Caco-2 (cell line): ENCODE measurements at regions of chr14 and their contacts with region 1.

Region 1: DNA sequence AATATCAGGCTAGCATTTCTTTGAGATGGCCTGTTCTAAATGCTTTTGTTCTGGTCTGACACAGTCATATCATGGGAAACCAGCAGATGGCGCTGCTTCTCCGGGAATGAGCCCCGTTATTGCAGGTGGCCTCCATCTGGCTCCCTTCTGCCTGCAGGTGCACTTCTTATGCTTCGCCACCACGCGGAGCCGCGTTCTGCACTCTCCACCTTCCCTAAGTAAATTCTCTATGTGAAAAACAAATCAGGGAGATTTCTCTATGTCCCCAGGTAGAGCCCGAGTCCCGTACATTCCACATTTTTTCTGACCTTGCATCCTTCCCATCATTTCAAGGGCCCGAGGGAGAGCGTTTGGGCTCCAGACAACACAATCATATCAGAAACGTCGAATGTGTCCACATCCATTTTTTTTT is 26.2 kb downstream of the GLRX5 start:
- DNase-seq: peak; percentile 86 to 91
- H3K4me3 ChIP-seq: no peak overlapping the region
- H3K4me3 Mint-ChIP-seq: no peak overlapping the region
- H3K27ac Mint-ChIP-seq: no peak overlapping the region
- H3K4me1 ChIP-seq: no peaks in the 10 kb centered on the region
- H3K4me1 Mint-ChIP-seq: no peaks in the 10 kb centered on the region
- H3K27me3 ChIP-seq: no peaks in the 10 kb centered on the region
- H3K27me3 Mint-ChIP-seq: no peaks in the 10 kb centered on the region
- CTCF ChIP-seq: peak; percentile 95 to 97

Region 2: DNA sequence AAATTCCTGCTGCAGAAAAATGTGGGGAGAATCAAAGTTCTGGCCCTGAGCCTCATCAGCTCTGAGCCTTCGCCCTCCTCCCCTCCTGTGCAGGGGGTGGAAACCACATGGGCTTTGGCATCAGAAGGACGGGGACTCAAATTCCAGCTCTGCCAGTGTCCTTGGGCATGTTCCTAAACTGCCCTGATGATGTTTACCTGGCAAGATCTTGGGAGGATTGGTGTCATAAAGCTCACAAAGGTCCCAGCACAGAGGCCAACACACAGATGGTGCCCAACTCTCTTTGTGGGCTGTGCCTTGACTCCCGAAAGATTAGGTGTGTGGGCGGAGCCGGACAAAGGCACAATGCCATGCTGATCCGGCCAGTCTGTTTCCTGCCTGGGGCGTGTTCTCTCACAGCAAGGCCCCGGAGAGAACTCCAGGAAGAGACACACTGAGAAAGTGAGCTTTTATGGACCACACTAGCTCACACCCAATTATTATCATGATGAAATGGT is 220.8 kb before region 1 on chr14:
- CTCF ChIA-PET with region 1: no interaction called
- POLR2A ChIA-PET with region 1: no interaction called
- intact Hi-C with region 1: no loop called
- DNase-seq: no peak
- H3K4me3 ChIP-seq: no peak overlapping the region
- H3K4me3 Mint-ChIP-seq: no peak overlapping the region
- H3K27ac Mint-ChIP-seq: no peak overlapping the region
- H3K4me1 ChIP-seq: no peaks in the 10 kb centered on the region; the same call in 1 of the 2 replicates
- H3K4me1 Mint-ChIP-seq: peaks cover 8% of the 10 kb centered on the region
- H3K27me3 ChIP-seq: no peaks in the 10 kb centered on the region
- H3K27me3 Mint-ChIP-seq: peaks cover 7% of the 10 kb centered on the region
- CTCF ChIP-seq: no peak

Region 3: DNA sequence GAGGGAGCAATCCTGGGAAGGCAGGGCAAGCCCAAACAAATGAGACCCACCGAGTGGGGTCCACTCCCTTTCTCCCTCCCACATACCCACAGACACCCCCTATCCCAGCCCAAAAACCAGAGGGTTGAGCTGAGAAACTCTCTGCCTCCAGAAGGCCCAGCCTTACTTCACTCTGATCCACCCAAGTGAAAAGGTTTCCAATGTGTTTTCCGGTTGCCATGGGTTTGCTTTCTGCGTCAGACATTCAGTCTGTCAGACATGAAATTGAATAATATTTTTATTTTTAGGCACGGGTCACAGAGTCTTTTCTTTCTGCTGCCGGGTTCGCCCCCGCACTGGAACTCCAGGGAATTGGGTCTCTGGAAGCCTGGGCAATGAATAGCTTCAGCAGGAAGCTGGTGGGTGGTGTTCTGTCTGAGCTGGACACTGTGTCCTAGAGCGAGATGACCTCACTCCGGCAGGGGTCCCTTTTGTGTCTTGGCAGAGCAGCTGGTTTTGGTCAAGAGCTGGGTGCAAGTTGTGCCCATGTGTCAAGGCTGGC is 171.5 kb before region 1 on chr14:
- CTCF ChIA-PET with region 1: no interaction called
- POLR2A ChIA-PET with region 1: no interaction called
- intact Hi-C with region 1: no loop called
- DNase-seq: no peak
- H3K4me3 ChIP-seq: no peak overlapping the region
- H3K4me3 Mint-ChIP-seq: no peak overlapping the region
- H3K27ac Mint-ChIP-seq: no peak overlapping the region
- H3K4me1 ChIP-seq: no peaks in the 10 kb centered on the region
- H3K4me1 Mint-ChIP-seq: peaks cover 8% of the 10 kb centered on the region
- H3K27me3 ChIP-seq: no peaks in the 10 kb centered on the region
- H3K27me3 Mint-ChIP-seq: no peaks in the 10 kb centered on the region
- CTCF ChIP-seq: no peak

Region 4: DNA sequence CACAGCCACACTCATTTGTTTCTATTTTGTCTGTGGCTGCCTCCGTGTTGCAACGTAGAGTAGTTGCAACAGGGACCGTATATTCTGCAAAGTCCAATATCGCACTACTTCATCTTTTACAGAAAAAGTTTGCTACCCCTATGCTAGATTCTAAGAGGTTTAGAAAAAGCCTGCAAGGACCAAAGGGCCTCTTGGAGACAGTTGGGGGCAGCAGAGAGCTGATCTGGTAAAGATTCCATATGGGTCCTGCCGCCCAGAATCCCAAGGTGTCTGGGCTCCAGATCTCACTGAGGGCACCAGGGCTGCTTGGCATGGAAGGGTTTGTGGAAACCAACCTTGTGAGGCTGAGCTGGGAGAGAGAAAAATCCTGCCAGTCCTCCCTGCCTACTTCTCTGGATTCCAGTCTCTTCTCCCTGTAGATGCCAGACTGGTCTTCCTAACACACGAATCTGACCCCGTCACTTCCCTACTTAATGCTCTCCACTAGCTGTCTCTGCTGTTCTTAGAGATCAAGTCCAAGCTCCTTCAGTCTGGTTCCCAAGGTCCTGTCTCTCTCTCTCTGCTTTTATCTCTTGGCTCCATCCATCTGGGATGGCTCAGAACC is 48.5 kb after region 1 on chr14:
- CTCF ChIA-PET with region 1: no interaction called
- POLR2A ChIA-PET with region 1: no interaction called
- intact Hi-C with region 1: loop called (anchors 1 kb)
- DNase-seq: peak; percentile 51 to 58
- H3K4me3 ChIP-seq: no peak overlapping the region
- H3K4me3 Mint-ChIP-seq: no peak overlapping the region
- H3K27ac Mint-ChIP-seq: no peak overlapping the region
- H3K4me1 ChIP-seq: peaks cover 3% of the 10 kb centered on the region; the same call in 1 of the 2 replicates
- H3K4me1 Mint-ChIP-seq: no peaks in the 10 kb centered on the region
- H3K27me3 ChIP-seq: no peaks in the 10 kb centered on the region; the same call in none of the 2 replicates
- H3K27me3 Mint-ChIP-seq: peaks cover 24% of the 10 kb centered on the region
- CTCF ChIP-seq: peak; percentile 75 to 77

Region 5: DNA sequence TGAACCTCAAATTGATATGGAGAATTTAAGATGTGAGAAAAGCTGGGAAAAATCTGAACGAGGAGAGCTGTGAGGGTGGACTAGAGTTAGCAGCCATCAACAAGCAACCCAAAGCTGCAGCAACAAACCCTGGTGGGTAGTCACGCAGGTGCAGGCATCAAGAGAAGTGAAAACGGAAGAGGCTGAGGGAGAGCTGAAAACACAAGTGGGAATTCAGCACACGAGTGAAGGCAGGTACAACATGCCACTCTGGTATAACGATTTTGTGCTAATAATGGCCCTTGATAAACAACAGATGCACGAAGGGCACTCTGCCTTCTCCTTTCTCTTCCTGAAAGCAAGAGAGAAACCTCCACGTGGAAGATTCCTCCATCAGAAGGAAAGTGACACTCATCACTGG is 136.8 kb after region 1 on chr14:
- CTCF ChIA-PET with region 1: no interaction called
- POLR2A ChIA-PET with region 1: no interaction called
- intact Hi-C with region 1: loop called (anchors 1 kb)
- DNase-seq: no peak
- H3K4me3 ChIP-seq: no peak overlapping the region
- H3K4me3 Mint-ChIP-seq: no peak overlapping the region
- H3K27ac Mint-ChIP-seq: no peak overlapping the region
- H3K4me1 ChIP-seq: no peaks in the 10 kb centered on the region
- H3K4me1 Mint-ChIP-seq: no peaks in the 10 kb centered on the region
- H3K27me3 ChIP-seq: no peaks in the 10 kb centered on the region; the same call in none of the 2 replicates
- H3K27me3 Mint-ChIP-seq: peaks cover 25% of the 10 kb centered on the region
- CTCF ChIP-seq: no peak

Region 6: DNA sequence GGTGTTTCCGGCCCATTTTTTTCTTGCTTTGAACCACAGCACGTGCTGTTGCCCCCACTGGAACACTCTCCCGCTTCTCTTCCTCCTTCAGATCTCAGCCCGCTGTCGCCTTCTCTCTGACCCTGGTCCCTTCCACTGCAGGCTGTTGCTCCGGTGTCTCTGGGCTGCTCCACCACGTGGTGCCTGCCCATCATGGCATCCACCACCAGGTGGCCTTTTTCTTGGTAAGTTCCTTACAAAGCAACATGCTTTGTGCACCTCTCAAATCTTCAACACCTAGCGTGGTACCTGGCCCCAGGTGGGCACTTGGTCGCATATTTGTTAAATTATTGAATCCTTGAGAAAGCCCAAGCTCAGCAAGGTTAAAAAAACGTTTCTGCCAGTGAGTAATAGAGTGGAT is 334.7 kb after region 1 on chr14:
- CTCF ChIA-PET with region 1: no interaction called
- POLR2A ChIA-PET with region 1: no interaction called
- intact Hi-C with region 1: loop called (anchors 10 kb)
- DNase-seq: peak; percentile 43 to 59
- H3K4me3 ChIP-seq: no peak overlapping the region
- H3K4me3 Mint-ChIP-seq: no peak overlapping the region
- H3K27ac Mint-ChIP-seq: no peak overlapping the region
- H3K4me1 ChIP-seq: no peaks in the 10 kb centered on the region
- H3K4me1 Mint-ChIP-seq: no peaks in the 10 kb centered on the region
- H3K27me3 ChIP-seq: no peaks in the 10 kb centered on the region
- H3K27me3 Mint-ChIP-seq: peaks cover 47% of the 10 kb centered on the region
- CTCF ChIP-seq: peak; percentile 43 to 52

Region 7: GRCh38 chr14:96053600-96054381 is 492.8 kb after region 1 on chr14:
- CTCF ChIA-PET with region 1: no interaction called
- POLR2A ChIA-PET with region 1: no interaction called
- intact Hi-C with region 1: loop called (anchors 5 kb)
- DNase-seq: no peak
- H3K4me3 ChIP-seq: no peak overlapping the region
- H3K4me3 Mint-ChIP-seq: no peak overlapping the region
- H3K27ac Mint-ChIP-seq: no peak overlapping the region
- H3K4me1 ChIP-seq: no peaks in the 10 kb centered on the region
- H3K4me1 Mint-ChIP-seq: no peaks in the 10 kb centered on the region
- H3K27me3 ChIP-seq: no peaks in the 10 kb centered on the region
- H3K27me3 Mint-ChIP-seq: peaks cover 10% of the 10 kb centered on the region
- CTCF ChIP-seq: no peak